Activated CD4-positive, alpha-beta memory T cell treated with anti-CD3 and anti-CD28 coated beads for 36 hours (primary cell): ENCODE measurements at regions of chr7 and their contacts with region 1.

Region 1: GRCh38 chr7:4775250-4775847 is at the start of gene AP5Z1:
- DNase-seq: peak; percentile 96
- H3K4me3 Mint-ChIP-seq: peak within 1 kb of the TSS; percentile 95
- H3K27ac Mint-ChIP-seq: peak within 1 kb of the TSS; percentile 91
- H3K4me1 Mint-ChIP-seq: peaks cover 36% of the 10 kb centered on the region
- H3K27me3 Mint-ChIP-seq: no peaks in the 10 kb centered on the region
- total RNA-seq, gene AP5Z1: 21.6 to 24.1 TPM

Region 2: DNA sequence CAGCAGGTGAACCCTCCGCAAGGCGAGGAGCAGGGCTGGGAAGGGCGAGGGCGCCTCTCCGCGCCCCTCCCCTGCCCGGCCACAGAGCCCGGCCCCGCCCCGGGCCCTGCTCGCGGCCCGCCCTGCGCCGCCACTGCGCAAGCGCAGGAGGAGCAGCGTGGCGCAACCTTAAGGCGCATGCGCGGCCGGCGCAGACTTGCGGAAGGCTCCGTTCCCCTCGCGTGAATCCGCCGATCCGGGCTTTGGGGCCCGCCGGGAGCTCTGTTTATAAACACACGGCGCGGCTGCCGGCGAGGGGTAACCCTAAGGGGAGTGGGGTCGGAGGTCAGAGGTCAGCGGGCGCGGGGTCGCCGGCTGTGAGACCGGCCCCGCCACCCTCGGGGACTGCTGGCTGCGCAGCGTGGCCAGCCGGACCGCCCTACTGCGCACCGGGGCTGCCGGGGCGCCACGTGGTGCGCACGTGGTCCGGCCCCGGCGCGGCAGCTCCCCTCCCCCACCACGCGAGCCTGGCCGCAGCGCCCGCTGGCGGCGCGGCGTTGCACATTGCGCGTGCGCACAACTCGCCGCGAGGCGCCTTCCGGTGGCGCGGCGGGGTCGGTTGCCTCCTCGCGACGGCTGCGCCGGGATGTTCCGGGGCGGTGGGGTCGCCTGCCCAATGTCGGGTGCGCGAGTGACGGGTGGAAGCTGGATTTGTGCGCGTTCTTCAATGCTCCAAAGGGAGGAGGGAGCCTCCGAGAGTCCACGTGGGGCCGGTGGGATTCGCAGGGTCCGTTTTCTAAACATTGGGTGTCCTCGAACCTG is 133.5 kb before region 1 on chr7:
- CTCF ChIA-PET with region 1: interaction called, 4 read pairs
- POLR2A ChIA-PET with region 1: interaction called, 15 read pairs
- intact Hi-C with region 1: loop called (anchors 1 kb)
- DNase-seq: peak; percentile 96
- H3K4me3 Mint-ChIP-seq: peak overlapping the region; percentile 87
- H3K27ac Mint-ChIP-seq: peak overlapping the region; percentile 91
- H3K4me1 Mint-ChIP-seq: peaks cover 12% of the 10 kb centered on the region
- H3K27me3 Mint-ChIP-seq: no peaks in the 10 kb centered on the region

Region 3: DNA sequence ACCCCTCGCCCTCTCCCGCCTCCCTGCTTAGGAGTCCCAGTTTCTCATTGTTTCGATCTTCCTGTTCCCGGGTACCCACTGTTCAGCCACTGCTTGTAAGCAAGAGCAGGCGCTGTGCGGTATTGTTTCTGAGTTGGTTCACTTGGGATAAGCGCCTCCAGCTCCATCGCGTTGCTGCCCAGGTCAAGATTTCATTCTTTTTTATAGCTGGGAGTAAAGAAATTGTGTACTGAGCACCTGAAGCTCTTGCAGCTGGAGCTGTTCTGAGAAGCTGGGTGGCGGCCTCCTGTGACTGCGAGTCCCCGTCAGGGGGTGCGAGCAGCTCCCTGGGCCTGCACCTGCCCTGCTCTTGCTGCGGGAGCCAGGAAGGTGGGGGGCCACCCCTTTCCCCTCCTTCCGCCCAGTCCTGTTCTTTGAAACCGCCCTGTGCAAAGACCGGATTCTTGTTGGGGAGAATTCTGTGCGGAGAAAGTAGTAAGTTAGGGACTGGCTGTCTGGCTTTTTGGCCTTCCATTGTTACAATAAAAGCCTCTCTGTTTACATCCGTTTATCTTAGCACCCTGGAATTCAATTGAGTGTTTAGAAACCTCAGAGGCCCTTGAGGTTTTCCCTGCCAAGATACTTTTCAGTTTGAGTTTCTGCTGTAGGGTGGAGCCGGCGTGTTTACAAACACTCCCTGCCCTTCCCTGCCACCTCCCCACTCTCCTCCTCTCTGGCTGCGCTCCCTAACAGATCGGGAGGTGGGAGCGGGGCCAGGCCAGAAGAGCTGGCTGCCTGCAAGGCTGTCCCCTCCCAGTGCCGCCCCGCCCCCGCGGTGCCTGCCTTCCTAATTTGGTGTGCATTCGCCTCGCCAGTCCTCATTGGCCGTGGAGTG is 30.7 kb before region 1 on chr7:
- CTCF ChIA-PET with region 1: no interaction called
- POLR2A ChIA-PET with region 1: interaction called, 15 read pairs
- intact Hi-C with region 1: loop called (anchors 2 kb)
- DNase-seq: peak; percentile 81
- H3K4me3 Mint-ChIP-seq: peak overlapping the region; percentile 81
- H3K27ac Mint-ChIP-seq: peak overlapping the region; percentile 91
- H3K4me1 Mint-ChIP-seq: peaks cover 56% of the 10 kb centered on the region
- H3K27me3 Mint-ChIP-seq: no peaks in the 10 kb centered on the region

Region 4: DNA sequence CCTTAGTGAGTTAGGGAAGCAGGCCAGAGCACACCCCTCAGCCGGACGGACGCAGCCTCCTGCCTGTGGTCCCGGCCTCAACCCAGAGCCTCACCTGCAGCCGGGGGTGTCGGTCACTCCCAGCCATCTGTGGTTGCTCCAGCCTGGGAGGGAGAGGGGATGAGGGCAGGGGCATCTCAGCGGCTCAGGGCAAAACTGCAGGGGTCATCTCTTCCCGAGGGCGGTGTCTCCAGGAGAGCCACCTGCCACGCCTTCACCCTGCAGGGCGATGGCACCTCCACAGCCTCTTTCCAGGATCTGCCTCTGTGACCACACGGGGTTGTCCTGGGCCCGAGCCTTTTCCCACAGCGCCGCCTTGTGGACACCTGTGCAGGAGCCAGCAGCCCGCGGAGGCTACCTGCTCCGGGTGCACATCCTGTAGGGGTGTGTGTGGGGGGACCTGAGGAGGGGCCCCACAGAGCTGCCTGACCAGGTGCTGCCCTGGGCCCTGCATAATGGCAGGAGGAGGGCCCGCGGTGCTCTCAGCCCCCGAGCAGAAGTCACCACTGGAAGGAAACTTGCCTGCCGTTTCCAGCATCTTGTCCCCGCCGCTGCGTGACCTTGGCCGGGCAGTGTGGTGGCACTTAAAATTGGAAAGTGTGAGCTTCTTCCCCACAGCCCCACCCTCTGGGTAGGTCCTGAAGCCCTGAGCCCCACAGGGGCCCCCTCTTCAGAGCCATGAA is 21.5 kb before region 1 on chr7:
- CTCF ChIA-PET with region 1: interaction called, 11 read pairs
- POLR2A ChIA-PET with region 1: interaction called, 3 read pairs
- intact Hi-C with region 1: no loop called
- DNase-seq: peak; percentile 90
- H3K4me3 Mint-ChIP-seq: no peak overlapping the region
- H3K27ac Mint-ChIP-seq: no peak overlapping the region
- H3K4me1 Mint-ChIP-seq: peaks cover 21% of the 10 kb centered on the region
- H3K27me3 Mint-ChIP-seq: no peaks in the 10 kb centered on the region

Region 5: DNA sequence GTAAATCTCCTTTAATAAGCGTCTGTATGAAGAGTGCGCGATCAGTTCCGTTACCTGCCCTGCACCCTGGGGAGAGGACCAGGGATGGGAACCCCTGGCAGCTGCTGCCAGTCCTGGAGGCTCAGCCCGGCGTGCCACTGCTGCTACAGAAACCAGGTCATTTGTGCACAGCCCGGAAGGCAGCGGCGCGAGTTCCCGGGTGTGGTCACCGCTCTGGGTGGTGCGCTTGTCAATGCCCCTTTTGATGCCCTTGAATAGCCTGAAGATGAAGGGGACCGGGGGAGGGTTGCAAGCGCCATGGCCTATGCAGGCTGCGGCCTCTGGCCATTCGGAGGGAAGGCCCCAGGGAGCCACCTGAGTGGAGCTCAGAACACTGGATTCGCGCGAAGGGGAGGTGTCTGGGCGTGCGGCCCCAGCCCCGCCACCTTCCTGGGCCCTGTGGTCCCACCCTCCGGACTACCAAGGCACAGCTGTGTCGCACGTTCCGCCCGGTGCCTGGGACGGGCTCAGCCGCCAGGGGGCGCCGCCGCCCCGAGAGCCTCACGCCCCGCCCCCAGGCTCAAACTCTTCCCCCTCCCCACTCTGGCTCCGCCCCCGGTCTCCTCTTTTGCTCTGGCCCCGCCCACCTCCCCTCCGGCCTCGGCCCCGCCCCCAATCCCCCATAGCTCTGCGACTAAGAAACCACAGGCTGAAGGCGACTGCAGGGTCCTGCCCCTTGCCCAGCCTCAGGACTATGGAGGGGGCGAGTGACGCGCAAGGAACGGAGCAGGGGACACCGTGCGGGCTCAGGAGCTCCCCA is 16.6 kb after region 1 on chr7:
- CTCF ChIA-PET with region 1: interaction called, 21 read pairs
- POLR2A ChIA-PET with region 1: interaction called, 15 read pairs
- intact Hi-C with region 1: loop called (anchors 1 kb)
- DNase-seq: peak; percentile 84
- H3K4me3 Mint-ChIP-seq: no peak overlapping the region
- H3K27ac Mint-ChIP-seq: no peak overlapping the region
- H3K4me1 Mint-ChIP-seq: no peaks in the 10 kb centered on the region
- H3K27me3 Mint-ChIP-seq: no peaks in the 10 kb centered on the region

Region 6: GRCh38 chr7:6604458-6604857 is 1829.1 kb after region 1 on chr7:
- CTCF ChIA-PET with region 1: no interaction called
- POLR2A ChIA-PET with region 1: no interaction called
- intact Hi-C with region 1: no loop called
- DNase-seq: no peak
- H3K4me3 Mint-ChIP-seq: no peak overlapping the region
- H3K27ac Mint-ChIP-seq: no peak overlapping the region
- H3K4me1 Mint-ChIP-seq: no peaks in the 10 kb centered on the region
- H3K27me3 Mint-ChIP-seq: no peaks in the 10 kb centered on the region